ENCODE measurements at regions of chrX and their contacts with region 1.

Region 1: GRCh38 chrX:109856974-109857373 is 123.9 kb upstream of the ACSL4 start:
- DNase-seq: peak; percentile 9
- ATAC-seq: no peak
- H3K4me3 Mint-ChIP-seq: no peak overlapping the region
- H3K27ac Mint-ChIP-seq: no peak overlapping the region
- H3K4me1 Mint-ChIP-seq: peaks cover 4% of the 10 kb centered on the region
- H3K27me3 Mint-ChIP-seq: no peaks in the 10 kb centered on the region
- CTCF ChIP-seq: peak; percentile 73

Region 2: GRCh38 chrX:109709129-109709631 is 147.8 kb before region 1 on chrX:
- CTCF ChIA-PET with region 1: interaction called, 140 read pairs
- POLR2A ChIA-PET with region 1: no interaction called
- intact Hi-C with region 1: loop called (anchors 2 kb)
- DNase-seq: no peak
- ATAC-seq: peak; percentile 58
- H3K4me3 Mint-ChIP-seq: peak overlapping the region; percentile 24
- H3K27ac Mint-ChIP-seq: peak overlapping the region; percentile 86
- H3K4me1 Mint-ChIP-seq: peaks cover 76% of the 10 kb centered on the region
- H3K27me3 Mint-ChIP-seq: no peaks in the 10 kb centered on the region
- CTCF ChIP-seq: no peak

Region 3: DNA sequence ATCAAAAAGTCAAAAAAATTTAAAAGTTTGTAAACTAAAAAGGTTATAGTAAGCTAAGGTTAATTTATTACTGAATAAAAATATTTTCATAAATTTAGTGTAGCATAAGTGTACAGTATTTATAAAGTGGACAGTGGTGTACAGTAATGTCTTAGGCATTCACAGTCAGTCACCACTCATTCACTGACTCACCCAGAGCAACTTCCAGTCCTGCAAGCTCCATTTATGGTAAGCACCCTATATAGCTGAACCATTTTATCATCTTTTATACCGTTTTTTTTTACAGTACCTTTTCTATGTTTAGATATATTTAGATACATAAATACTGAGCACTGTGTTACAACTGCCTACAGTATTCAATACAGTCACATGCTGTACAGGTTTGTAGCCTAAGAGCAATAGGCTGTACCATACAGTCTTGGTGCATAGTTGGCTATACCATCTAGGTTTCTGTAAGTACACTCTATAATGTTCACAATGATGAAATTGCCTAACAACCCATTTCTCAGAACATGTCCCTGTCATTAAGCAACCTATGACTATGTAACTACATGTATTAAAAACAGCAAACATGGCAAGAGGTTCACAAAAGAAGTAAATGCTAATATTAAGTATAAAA is 142.5 kb before region 1 on chrX:
- CTCF ChIA-PET with region 1: interaction called, 140 read pairs
- POLR2A ChIA-PET with region 1: no interaction called
- intact Hi-C with region 1: loop called (anchors 2 kb)
- DNase-seq: no peak
- ATAC-seq: no peak
- H3K4me3 Mint-ChIP-seq: no peak overlapping the region
- H3K27ac Mint-ChIP-seq: no peak overlapping the region
- H3K4me1 Mint-ChIP-seq: peaks cover 49% of the 10 kb centered on the region
- H3K27me3 Mint-ChIP-seq: no peaks in the 10 kb centered on the region
- CTCF ChIP-seq: no peak

Region 4: DNA sequence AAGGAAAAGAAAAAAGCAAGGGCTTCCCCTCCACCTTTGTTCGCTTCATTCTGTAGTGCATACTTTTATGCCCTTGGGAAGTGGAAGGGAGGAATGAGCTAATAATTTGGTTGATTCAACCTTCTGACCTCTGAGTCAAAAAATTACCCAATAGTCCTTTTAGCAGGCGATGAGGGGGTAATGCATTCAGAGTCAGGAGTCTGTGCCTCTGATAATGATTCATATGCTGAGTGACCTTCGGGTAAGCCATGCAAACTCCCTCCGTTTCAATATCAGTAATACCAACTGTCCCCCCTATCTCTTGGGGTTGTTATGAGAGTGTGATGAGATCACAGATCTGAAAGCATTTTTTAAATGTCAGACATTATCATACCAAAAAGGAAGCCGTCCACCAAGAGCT is 82.3 kb before region 1 on chrX:
- CTCF ChIA-PET with region 1: no interaction called
- POLR2A ChIA-PET with region 1: no interaction called
- intact Hi-C with region 1: loop called (anchors 10 kb)
- DNase-seq: peak; percentile 11
- ATAC-seq: peak; percentile 96
- H3K4me3 Mint-ChIP-seq: no peak overlapping the region
- H3K27ac Mint-ChIP-seq: no peak overlapping the region
- H3K4me1 Mint-ChIP-seq: peaks cover 7% of the 10 kb centered on the region
- H3K27me3 Mint-ChIP-seq: no peaks in the 10 kb centered on the region
- CTCF ChIP-seq: no peak

Region 5: DNA sequence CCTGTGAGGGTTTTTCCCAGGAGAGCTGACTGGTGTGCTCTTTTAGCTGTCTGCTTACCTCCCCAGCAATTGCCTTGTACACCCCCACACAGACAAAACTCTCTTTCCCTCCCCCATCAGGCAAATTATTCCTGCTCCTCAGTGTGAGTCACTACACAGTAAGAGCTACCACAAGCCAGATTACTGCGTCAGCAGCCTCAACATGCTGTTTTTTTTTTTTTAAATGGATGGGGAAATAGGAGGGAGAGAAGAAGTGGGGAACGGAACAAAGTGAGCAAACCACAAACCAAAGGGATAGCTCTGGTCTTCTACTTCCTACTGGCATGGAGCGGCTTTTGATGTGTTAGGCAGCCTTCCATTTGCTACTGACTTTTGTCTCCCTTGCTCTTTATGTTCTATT is 16.4 kb before region 1 on chrX:
- CTCF ChIA-PET with region 1: interaction called, 24 read pairs
- POLR2A ChIA-PET with region 1: no interaction called
- intact Hi-C with region 1: no loop called
- DNase-seq: peak; percentile 17
- ATAC-seq: peak; percentile 55
- H3K4me3 Mint-ChIP-seq: no peak overlapping the region
- H3K27ac Mint-ChIP-seq: no peak overlapping the region
- H3K4me1 Mint-ChIP-seq: peaks cover 8% of the 10 kb centered on the region
- H3K27me3 Mint-ChIP-seq: no peaks in the 10 kb centered on the region
- CTCF ChIP-seq: no peak

Region 6: GRCh38 chrX:109872021-109872732 is 15.2 kb after region 1 on chrX:
- CTCF ChIA-PET with region 1: interaction called, 16 read pairs
- POLR2A ChIA-PET with region 1: no interaction called
- intact Hi-C with region 1: no loop called
- DNase-seq: no peak
- ATAC-seq: no peak
- H3K4me3 Mint-ChIP-seq: no peak overlapping the region
- H3K27ac Mint-ChIP-seq: no peak overlapping the region
- H3K4me1 Mint-ChIP-seq: no peaks in the 10 kb centered on the region
- H3K27me3 Mint-ChIP-seq: no peaks in the 10 kb centered on the region
- CTCF ChIP-seq: no peak

Measured in activated CD8-positive, alpha-beta T cell treated with anti-CD3 and anti-CD28 coated beads for 36 hours (primary cell).